Lower leg skin (tissue), 4 donors: ENCODE measurements at regions of chr12 and their contacts with region 1.

Region 1: GRCh38 chr12:98653866-98654493 is 8.9 kb downstream of the APAF1 start:
- DNase-seq: no peak
- H3K4me3 ChIP-seq: no peak overlapping the region
- CTCF ChIP-seq: no peak
- POLR2A ChIP-seq: no peak

Region 2: GRCh38 chr12:98572010-98572409 is 82.0 kb before region 1 on chr12:
- intact Hi-C with region 1: loop called (anchors 5 kb)
- DNase-seq: no peak
- H3K4me3 ChIP-seq: no peak overlapping the region
- CTCF ChIP-seq: no peak
- POLR2A ChIP-seq: no peak